ENCODE measurements at regions of chr12 and their contacts with region 1.

Region 1: DNA sequence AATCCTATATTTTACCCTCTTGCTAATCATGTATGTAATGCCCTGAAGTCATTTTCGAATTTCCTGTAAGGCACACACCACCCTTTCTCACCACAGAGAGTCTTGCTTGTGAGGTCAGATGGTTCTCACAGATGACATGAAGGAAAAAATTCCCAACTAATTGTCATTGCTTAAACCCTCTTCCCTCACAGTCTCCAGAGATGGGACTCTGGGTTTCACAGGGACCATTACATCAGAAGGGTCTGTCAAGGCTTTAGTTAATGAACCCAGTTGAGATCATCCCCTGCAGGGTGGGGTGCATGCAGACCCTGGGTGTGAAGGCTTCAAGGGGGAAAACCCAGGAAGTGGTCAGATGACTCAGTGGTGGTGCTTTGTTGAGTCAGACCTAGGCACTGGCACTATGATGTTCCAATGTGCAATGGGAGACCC is 229.6 kb downstream of the BCAT1 start:
- DNase-seq: peak; percentile 53
- H3K4me3 Mint-ChIP-seq: peak overlapping the region; percentile 9
- H3K27ac Mint-ChIP-seq: peak overlapping the region; percentile 80
- H3K4me1 Mint-ChIP-seq: peaks cover 35% of the 10 kb centered on the region
- H3K27me3 Mint-ChIP-seq: peaks cover 1% of the 10 kb centered on the region

Region 2: GRCh38 chr12:24596768-24597388 is 122.4 kb before region 1 on chr12:
- intact Hi-C with region 1: loop called (anchors 2 kb)
- DNase-seq: no peak
- H3K4me3 Mint-ChIP-seq: no peak overlapping the region
- H3K27ac Mint-ChIP-seq: no peak overlapping the region
- H3K4me1 Mint-ChIP-seq: no peaks in the 10 kb centered on the region
- H3K27me3 Mint-ChIP-seq: peaks cover 2% of the 10 kb centered on the region

Region 3: DNA sequence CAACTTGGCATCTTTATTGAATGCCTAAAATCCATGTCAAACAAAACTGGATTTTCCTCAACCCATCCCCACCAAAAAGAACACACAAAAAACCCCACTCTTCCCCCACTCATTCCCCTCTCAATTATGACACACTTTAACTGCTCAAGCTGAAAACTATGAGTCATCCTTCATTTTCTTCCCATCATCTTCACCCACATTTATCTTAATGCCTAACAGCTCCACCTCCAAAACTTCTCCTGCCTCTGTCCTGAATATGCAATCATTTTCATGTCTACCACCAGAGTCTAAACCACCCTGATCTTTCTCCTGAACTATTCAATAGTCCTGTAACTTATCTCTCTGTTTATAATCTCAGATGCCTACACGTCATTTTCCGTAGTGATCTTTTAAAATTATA is 10.1 kb before region 1 on chr12:
- intact Hi-C with region 1: loop called (anchors 1 kb)
- DNase-seq: no peak
- H3K4me3 Mint-ChIP-seq: no peak overlapping the region
- H3K27ac Mint-ChIP-seq: no peak overlapping the region
- H3K4me1 Mint-ChIP-seq: peaks cover 20% of the 10 kb centered on the region
- H3K27me3 Mint-ChIP-seq: no peaks in the 10 kb centered on the region

Region 4: DNA sequence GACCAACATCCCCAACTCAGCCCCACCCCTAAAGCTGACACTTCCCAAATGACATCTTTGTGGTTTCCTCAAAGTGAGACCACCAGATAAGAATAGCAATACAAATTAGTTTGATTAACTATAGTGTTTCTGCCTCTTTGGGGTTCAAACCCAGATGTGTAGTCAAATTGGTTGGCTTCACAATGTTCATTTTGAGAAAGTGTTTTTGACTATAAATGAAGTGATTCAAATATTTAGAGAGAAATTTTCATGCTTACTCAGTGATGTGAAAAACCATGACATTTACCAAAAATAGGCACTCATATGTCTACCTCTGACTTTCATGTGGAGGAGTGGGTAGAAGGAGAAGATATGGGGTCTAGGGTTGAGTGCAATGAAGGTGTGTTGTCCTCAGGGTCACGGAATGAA is 11.2 kb after region 1 on chr12:
- intact Hi-C with region 1: loop called (anchors 1 kb)
- DNase-seq: no peak
- H3K4me3 Mint-ChIP-seq: no peak overlapping the region
- H3K27ac Mint-ChIP-seq: no peak overlapping the region
- H3K4me1 Mint-ChIP-seq: peaks cover 19% of the 10 kb centered on the region
- H3K27me3 Mint-ChIP-seq: no peaks in the 10 kb centered on the region

Region 5: GRCh38 chr12:24767016-24767415 is 47.7 kb after region 1 on chr12:
- intact Hi-C with region 1: loop called (anchors 2 kb)
- DNase-seq: no peak
- H3K4me3 Mint-ChIP-seq: no peak overlapping the region
- H3K27ac Mint-ChIP-seq: no peak overlapping the region
- H3K4me1 Mint-ChIP-seq: peaks cover 7% of the 10 kb centered on the region
- H3K27me3 Mint-ChIP-seq: no peaks in the 10 kb centered on the region

Region 6: DNA sequence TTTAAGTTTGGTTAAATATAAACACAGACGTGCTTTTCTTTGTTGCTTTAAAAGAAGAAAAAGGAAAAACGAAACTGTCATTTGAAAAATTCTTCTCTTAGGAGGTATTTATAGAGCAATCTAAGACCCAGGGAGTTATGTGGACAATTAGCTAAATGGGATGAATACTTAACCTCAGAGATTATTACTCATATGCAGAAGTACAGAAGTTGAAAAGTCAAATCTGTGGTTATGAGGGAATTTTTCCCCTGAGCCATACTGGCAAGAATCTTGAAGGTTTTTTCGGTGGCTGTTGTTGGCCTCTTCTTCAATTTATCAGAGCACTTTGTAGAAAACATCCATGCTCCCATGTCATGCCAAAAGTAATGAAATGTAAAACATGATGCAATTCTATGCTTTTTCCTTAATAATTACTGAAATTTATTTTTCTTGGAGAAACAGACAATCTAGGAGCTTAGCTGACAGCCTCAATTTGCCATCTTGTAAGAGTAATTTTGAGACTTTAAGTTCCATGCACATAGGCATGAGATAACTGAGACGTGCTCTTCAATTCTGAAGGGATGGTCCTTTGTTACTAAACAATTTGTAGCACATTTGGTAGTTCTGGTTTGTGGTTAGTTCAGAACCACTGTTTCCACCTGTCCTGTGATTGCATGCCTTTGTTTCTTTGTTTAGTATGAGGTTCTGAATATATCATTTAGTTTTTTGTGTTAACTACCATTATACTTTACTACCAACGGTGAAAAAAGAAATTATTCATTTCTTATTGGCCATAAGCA is 103.0 kb after region 1 on chr12:
- intact Hi-C with region 1: loop called (anchors 5 kb)
- DNase-seq: no peak
- H3K4me3 Mint-ChIP-seq: peak overlapping the region; percentile 48
- H3K27ac Mint-ChIP-seq: peak overlapping the region; percentile 91
- H3K4me1 Mint-ChIP-seq: peaks cover 29% of the 10 kb centered on the region
- H3K27me3 Mint-ChIP-seq: no peaks in the 10 kb centered on the region